MCF 10A (cell line): ENCODE measurements at regions of chr18 and their contacts with region 1.

Region 1: GRCh38 chr18:70421471-70422390 is 132.9 kb downstream of the SOCS6 start:
- DNase-seq: peak; percentile 97
- H3K4me3 Mint-ChIP-seq: peak overlapping the region; percentile 26
- H3K27ac Mint-ChIP-seq: peak overlapping the region; percentile 87
- H3K4me1 Mint-ChIP-seq: peaks cover 53% of the 10 kb centered on the region
- H3K27me3 Mint-ChIP-seq: no peaks in the 10 kb centered on the region
- CTCF ChIP-seq: no peak

Region 2: GRCh38 chr18:70205421-70206397 is 216.0 kb before region 1 on chr18 and contains the start of gene RTTN:
- CTCF ChIA-PET with region 1: interaction called, 3 read pairs
- POLR2A ChIA-PET with region 1: interaction called, 14 read pairs
- intact Hi-C with region 1: no loop called
- DNase-seq: peak; percentile 92
- H3K4me3 Mint-ChIP-seq: peak within 1 kb of the TSS; percentile 90
- H3K27ac Mint-ChIP-seq: peak within 1 kb of the TSS; percentile 93
- H3K4me1 Mint-ChIP-seq: peaks cover 16% of the 10 kb centered on the region
- H3K27me3 Mint-ChIP-seq: no peaks in the 10 kb centered on the region
- CTCF ChIP-seq: no peak
- total RNA-seq, gene RTTN: 55.8 and 64.7 TPM in 2 replicates

Region 3: GRCh38 chr18:70288851-70289328 is 132.8 kb before region 1 on chr18 and contains the start of gene SOCS6:
- CTCF ChIA-PET with region 1: no interaction called
- POLR2A ChIA-PET with region 1: interaction called, 15 read pairs
- intact Hi-C with region 1: no loop called
- DNase-seq: peak; percentile 68
- H3K4me3 Mint-ChIP-seq: peak within 1 kb of the TSS; percentile 81
- H3K27ac Mint-ChIP-seq: peak within 1 kb of the TSS; percentile 83
- H3K4me1 Mint-ChIP-seq: peaks cover 24% of the 10 kb centered on the region
- H3K27me3 Mint-ChIP-seq: no peaks in the 10 kb centered on the region
- CTCF ChIP-seq: no peak
- total RNA-seq, gene SOCS6: 16.9 and 20.4 TPM in 2 replicates

Region 4: DNA sequence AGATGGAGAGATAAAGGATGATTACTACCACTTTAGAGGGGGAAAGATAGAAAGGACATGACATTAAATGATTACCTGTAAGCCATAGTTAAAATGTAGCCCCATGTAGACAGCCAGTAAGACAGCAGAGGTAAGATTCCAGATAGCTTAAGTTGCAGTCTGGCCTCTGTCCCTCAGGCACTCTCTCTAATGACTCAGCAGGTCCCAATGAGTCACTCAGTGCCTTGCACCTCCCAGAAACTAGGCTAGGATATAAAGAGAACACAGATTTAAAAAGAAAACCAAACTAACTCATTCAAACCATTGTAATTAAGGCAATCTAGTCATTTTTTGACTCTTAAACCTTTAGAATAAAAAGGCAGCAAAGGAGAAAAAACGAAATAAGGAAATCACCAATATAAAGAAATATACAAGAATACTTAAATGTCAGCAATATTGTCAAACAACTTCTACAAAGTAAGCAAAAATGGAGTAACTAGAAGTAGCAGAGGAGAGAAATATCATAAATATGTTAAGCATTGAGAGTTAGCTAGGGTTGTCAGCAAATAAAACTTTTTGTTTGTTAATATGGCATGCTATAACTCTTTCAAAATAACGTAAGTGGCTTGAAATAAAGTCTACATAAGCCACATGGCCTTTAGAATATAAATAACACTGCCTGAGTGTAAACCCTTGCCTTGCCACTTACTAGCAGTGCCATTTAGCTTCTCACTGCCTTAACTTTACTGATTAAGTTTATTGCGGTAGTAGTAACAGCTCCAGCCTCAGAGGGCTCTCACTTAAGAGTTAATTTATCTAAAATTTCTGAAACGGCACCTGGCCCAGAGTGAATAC is 84.4 kb before region 1 on chr18:
- CTCF ChIA-PET with region 1: interaction called, 4 read pairs
- POLR2A ChIA-PET with region 1: interaction called, 16 read pairs
- intact Hi-C with region 1: loop called (anchors 1 kb)
- DNase-seq: peak; percentile 95
- H3K4me3 Mint-ChIP-seq: peak overlapping the region; percentile 1
- H3K27ac Mint-ChIP-seq: peak overlapping the region; percentile 90
- H3K4me1 Mint-ChIP-seq: peaks cover 26% of the 10 kb centered on the region
- H3K27me3 Mint-ChIP-seq: no peaks in the 10 kb centered on the region
- CTCF ChIP-seq: no peak

Region 5: DNA sequence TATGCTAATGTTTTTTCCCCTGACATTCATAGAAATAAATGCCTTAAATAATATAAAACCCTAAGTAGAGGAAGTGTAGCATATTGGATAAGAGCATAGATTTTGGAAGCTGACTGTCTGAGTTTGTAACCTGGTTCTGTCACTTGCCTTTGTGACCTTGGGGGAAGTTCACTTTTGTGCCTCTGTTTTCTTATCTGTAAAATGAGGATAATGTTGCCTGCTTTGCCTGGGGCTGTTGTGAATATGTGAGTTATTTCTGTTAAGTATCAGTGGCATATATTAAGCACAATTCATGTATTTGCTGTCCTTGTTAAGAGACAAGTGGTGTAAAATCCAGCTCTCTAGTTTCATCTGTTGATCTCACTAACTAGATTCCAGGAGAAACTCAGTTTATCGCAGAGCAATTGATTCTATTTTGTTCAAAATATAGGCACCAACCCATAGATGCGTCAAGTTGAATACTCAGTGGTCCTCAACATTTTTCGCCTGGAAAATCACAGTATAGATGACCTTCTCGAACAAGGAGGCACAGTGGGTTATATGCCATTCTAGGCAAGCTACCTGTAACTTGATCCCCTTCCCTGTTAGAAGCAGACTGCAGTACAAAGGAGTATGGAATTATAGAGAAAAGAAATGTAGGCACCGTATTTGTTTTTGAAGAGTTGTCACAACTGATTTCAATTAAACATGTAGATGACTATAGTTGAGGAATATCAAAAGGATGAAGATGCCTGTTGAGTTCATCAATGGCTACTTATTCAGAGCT is 65.9 kb before region 1 on chr18:
- CTCF ChIA-PET with region 1: interaction called, 3 read pairs
- POLR2A ChIA-PET with region 1: interaction called, 11 read pairs
- intact Hi-C with region 1: loop called (anchors 1 kb)
- DNase-seq: no peak
- H3K4me3 Mint-ChIP-seq: no peak overlapping the region
- H3K27ac Mint-ChIP-seq: peak overlapping the region; percentile 63
- H3K4me1 Mint-ChIP-seq: peaks cover 8% of the 10 kb centered on the region
- H3K27me3 Mint-ChIP-seq: no peaks in the 10 kb centered on the region
- CTCF ChIP-seq: no peak

Region 6: DNA sequence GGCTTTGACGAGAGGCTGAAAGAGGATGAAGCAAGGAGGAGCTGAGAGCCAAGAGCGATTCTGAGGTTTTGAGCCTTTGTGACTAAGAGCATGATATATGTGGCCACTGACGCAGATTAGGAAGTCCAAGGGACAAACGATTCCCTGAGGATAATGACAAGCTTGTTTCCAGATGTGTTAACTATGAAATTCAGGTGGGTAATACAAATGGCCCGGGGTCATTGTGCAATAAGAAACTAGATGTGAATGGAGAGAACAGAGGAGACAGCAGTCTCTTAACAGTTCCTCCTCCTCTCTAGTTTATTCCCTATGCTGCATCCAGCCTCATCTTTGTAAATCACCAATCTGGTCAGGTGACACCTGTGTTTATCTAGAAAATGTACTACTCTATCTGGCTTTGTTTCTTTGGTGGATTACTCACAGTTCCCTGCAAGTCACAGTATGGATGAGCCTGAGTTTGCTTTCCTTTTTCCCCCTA is 48.6 kb before region 1 on chr18:
- CTCF ChIA-PET with region 1: interaction called, 3 read pairs
- POLR2A ChIA-PET with region 1: interaction called, 16 read pairs
- intact Hi-C with region 1: loop called (anchors 5 kb)
- DNase-seq: peak; percentile 95
- H3K4me3 Mint-ChIP-seq: peak overlapping the region; percentile 11
- H3K27ac Mint-ChIP-seq: peak overlapping the region; percentile 46
- H3K4me1 Mint-ChIP-seq: peaks cover 40% of the 10 kb centered on the region
- H3K27me3 Mint-ChIP-seq: no peaks in the 10 kb centered on the region
- CTCF ChIP-seq: no peak

Region 7: DNA sequence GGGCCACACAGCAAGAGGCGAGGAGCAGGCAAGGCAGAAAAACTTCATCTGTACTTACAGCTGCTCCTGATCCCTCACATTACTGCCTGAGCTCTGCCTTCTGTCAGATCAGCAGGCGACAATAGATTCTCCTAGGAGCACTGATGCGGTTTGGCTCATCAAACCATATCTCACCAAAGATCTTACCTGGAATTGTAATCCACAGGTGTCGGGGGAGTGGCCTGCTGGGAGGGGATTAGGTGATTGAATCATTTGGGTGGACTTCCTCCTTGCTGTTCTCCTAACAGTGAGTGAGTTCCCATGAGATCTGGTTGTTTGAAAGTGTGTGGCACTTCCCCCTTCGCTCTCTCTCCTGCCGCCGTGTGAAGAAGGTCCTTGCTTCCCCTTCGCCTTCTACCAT is 514.4 kb after region 1 on chr18:
- CTCF ChIA-PET with region 1: no interaction called
- POLR2A ChIA-PET with region 1: no interaction called
- intact Hi-C with region 1: no loop called
- DNase-seq: no peak
- H3K4me3 Mint-ChIP-seq: no peak overlapping the region
- H3K27ac Mint-ChIP-seq: no peak overlapping the region
- H3K4me1 Mint-ChIP-seq: no peaks in the 10 kb centered on the region
- H3K27me3 Mint-ChIP-seq: no peaks in the 10 kb centered on the region
- CTCF ChIP-seq: no peak